ENCODE measurements at regions of chr19 and their contacts with region 1.

Region 1: DNA sequence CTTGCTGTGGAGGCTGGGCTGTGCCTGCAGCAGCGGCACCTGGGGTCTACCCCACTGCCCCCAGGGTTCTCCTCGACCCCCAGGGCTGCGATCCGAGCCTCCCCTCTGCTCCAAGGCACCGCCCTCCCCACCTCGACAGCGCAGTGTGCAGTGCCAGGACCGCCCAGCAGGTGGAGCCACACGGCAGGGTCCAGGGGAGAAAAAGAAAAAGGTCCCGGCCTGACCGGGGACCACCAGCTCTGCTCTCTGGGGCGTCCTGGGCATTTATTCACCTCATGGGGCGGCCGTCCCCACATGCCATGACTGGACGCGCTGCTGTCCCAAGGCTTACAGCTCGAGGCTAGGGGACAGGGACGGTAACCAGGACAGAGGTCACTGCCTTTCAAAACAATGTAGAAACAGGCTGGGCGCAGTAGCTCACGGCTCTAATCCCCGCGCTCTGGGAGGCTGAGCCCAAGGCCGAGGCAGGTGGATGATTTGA is 10.6 kb downstream of the REXO1 start:
- DNase-seq: no peak
- H3K4me3 ChIP-seq: no peak overlapping the region
- H3K27me3 ChIP-seq: no peaks in the 10 kb centered on the region
- CTCF ChIP-seq: peak; percentile 99

Region 2: GRCh38 chr19:1825909-1826556 is 11.6 kb before region 1 on chr19:
- CTCF ChIA-PET with region 1: interaction called, 79 read pairs
- POLR2A ChIA-PET with region 1: no interaction called
- DNase-seq: no peak
- H3K4me3 ChIP-seq: no peak overlapping the region
- H3K27me3 ChIP-seq: no peaks in the 10 kb centered on the region
- CTCF ChIP-seq: peak; percentile 93

Region 3: DNA sequence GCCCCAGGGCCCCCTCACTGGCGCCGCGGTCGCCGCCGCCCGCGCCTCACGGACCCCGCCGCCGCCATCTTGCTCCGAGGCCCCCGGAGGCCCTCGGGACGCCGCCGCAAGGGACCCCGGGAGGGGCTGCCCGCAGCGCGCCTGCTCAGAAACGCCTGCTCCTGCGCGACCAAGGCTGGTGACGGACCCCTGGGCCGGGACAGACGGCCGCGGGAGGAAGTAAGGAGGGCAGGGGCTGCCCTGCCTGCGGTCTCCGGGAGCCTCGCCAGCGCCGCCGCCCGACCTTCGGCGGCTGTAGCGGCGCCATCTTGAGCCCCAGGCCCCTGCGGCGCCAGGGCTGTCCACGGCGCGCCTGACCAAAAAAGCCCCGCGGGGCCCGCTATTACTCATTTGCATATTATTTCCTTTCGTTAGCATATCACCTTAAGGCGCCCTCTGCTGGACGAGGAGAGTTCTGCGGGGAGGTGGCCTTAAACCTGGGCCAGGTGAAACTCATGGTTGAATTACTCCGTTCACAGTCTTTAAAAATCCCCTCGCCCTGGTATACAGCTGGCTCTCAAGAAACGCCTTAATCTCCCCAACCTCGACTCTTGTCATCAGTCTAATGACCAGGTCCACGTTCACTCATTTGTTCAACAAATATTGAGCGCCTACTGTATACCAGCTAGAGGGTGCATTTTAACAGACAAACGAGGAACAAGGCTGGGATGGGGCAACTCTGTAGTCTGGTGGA is 10.9 kb after region 1 on chr19 and contains the start of gene REXO1:
- CTCF ChIA-PET with region 1: interaction called, 19 read pairs
- POLR2A ChIA-PET with region 1: no interaction called
- DNase-seq: peak; percentile 67
- H3K4me3 ChIP-seq: peak within 1 kb of the TSS; percentile 91
- H3K27me3 ChIP-seq: no peaks in the 10 kb centered on the region
- CTCF ChIP-seq: peak; percentile 87
- polyA plus RNA-seq, gene REXO1: 4.6 and 11.0 TPM in 2 replicates

Region 4: GRCh38 chr19:1855040-1855827 is 17.6 kb after region 1 on chr19:
- CTCF ChIA-PET with region 1: interaction called, 24 read pairs
- POLR2A ChIA-PET with region 1: no interaction called
- DNase-seq: peak; percentile 57
- H3K4me3 ChIP-seq: peak overlapping the region; percentile 48
- H3K27me3 ChIP-seq: no peaks in the 10 kb centered on the region
- CTCF ChIP-seq: 0 out of 2 replicates have a peak, but pooled peaks have one; percentile 8